PC-9 (cell line): ENCODE measurements at regions of chr12 and their contacts with region 1.

Region 1: GRCh38 chr12:13100882-13101769 is 2.3 kb downstream of the GSG1 start:
- DNase-seq: peak; percentile 87 to 99
- H3K4me3 ChIP-seq: peak overlapping the region; percentile 70
- H3K27ac ChIP-seq: peak overlapping the region; percentile 97
- H3K4me1 ChIP-seq: peaks cover 70% of the 10 kb centered on the region
- H3K27me3 ChIP-seq: no peaks in the 10 kb centered on the region
- CTCF ChIP-seq: no peak

Region 2: DNA sequence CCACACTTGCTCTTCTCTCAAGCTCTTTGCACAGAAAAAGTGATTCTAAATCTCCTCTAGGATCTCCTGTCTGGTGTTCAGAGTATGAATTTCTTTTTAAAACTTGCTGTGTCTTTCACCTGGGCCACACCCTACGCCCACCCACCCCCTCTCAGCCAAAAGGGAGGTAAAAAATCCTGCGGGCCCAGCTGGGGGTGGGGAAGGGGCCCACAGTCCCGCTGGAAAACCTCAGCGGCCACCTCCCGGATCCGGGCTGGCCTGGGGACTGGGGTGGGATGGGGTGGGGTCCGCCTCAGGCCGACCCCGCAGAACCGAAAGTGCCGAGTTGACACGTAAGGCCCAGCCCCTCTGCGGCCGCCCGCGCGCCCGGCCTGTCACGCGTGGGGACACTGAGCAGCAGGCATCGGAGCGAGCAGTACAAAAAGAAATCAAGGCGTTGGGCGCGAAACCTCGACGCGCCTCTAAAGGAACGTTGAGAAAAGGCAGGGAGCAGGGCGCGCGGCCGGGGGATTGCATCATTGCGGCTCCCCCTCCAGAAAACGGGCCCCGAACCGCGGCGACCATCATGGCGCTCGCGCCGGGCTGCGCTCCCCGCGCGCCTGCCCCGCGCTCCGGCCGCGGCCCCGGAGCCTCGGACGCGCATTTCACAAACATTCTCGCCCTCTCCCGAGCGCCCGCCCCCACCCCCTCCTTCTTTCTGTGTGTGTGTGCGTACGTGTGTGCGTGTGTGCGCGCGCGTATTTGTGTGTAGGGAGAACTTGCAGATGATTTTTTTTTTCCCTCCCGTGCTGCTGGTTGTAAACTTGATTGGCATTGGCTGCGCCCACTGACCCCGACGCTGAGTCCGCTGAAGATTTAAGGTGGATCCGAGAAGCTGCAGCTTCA is 376.2 kb before region 1 on chr12:
- CTCF ChIA-PET with region 1: no interaction called
- POLR2A ChIA-PET with region 1: interaction called, 12 read pairs
- intact Hi-C with region 1: no loop called
- DNase-seq: peak in 1 of 2 experiments; percentile 96
- H3K4me3 ChIP-seq: peak overlapping the region; percentile 96
- H3K27ac ChIP-seq: peak overlapping the region; percentile 98
- H3K4me1 ChIP-seq: peaks cover 31% of the 10 kb centered on the region
- H3K27me3 ChIP-seq: no peaks in the 10 kb centered on the region
- CTCF ChIP-seq: no peak

Region 3: GRCh38 chr12:13135371-13136178 is 34.4 kb after region 1 on chr12:
- CTCF ChIA-PET with region 1: interaction called, 13 read pairs
- POLR2A ChIA-PET with region 1: interaction called, 37 read pairs
- intact Hi-C with region 1: loop called (anchors 1 kb)
- DNase-seq: peak; percentile 99
- H3K4me3 ChIP-seq: peak overlapping the region; percentile 39; the same call in 1 of the 2 replicates
- H3K27ac ChIP-seq: peak overlapping the region; percentile 88
- H3K4me1 ChIP-seq: peaks cover 50% of the 10 kb centered on the region
- H3K27me3 ChIP-seq: no peaks in the 10 kb centered on the region
- CTCF ChIP-seq: peak; percentile 32; the same call in 1 of the 2 replicates

Region 4: DNA sequence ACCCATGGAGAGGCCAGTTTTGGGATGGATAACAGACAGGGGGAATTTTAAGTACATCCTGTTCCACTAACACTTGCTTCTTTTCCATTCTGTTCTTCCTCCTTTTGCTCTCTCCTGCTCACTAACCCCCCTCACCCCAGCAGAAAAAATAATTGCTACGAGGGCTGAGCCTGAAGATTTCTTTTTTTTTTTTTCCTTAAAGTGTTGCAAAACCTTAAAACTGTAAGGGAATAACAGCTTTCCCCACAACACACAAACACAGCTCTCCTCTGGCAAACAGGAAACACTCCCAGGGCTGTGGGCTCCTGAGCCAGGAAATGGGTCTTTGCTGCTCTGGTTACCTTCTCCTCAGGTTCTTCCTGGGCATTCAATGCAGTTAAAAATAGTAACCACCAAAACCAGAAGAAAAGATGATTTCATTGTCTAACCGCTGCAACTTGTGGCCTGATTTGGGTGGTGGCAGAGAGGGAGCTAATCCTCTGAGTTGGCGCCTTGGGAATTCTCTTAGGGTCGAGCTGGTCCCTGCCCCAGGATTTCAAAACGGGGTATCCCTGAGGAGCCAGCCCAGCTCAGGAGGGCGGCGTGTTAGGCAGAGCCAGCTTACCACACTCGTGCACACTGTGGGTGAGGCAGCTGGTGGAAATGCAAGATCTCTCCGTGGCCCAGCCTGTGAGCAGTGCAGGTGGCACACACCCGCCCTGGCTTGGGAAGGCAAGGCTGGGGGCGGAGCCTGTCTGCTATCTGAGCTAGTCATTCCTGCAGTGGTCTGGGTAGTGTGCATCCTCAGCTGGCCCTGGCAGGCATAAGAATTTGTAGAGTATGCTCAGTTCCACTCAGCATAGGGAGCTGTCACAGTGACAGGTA is 78.3 kb after region 1 on chr12:
- CTCF ChIA-PET with region 1: interaction called, 7 read pairs
- POLR2A ChIA-PET with region 1: interaction called, 15 read pairs
- intact Hi-C with region 1: loop called (anchors 1 kb)
- DNase-seq: peak; percentile 94 to 95
- H3K4me3 ChIP-seq: peak overlapping the region; percentile 39; the same call in 1 of the 2 replicates
- H3K27ac ChIP-seq: peak overlapping the region; percentile 95
- H3K4me1 ChIP-seq: peaks cover 89% of the 10 kb centered on the region
- H3K27me3 ChIP-seq: no peaks in the 10 kb centered on the region
- CTCF ChIP-seq: no peak

Region 5: DNA sequence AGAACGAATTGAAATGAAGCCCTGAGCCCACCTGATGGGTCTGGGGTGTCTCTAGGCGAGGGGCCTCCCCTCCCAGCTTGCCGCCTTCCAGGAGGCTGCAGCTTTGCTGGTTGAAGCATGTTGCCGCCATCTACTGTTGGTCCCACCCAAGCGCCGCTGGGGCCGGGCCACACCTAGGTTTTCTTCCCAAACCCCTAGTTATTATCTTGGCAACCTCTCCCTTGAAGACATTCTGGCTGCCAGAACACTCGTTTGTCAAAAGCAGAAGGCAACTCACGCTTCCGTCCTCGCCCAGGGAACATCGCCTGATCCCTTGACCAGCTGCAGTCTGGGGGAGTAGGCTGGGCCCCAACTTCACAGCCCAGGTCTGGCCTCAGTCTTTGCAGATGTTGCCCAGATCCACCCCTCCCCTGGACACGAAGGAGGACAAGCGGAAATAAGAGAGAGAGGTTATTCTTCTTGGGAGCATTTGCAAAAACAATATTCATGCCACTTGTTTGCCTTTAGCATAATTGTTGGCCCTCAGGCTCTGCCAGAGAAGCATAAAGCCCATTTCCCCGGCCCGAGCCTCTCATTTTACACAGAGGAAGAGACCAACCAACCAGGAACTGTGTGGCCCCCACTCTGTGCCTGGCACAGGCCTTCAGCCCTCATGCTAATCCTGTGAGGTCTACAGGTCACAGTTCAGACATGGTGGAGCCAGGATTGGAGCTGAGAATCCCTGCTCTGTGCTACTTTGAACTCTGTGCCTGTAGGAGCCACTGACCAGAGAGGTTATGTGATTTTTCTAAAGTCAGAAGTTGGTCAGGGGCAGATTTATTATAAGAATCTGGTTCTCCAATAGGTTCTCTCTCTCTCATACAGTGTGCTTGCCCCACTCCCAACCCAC is 102.2 kb after region 1 on chr12:
- CTCF ChIA-PET with region 1: interaction called, 10 read pairs
- POLR2A ChIA-PET with region 1: interaction called, 22 read pairs
- intact Hi-C with region 1: loop called (anchors 1 kb)
- DNase-seq: peak in 1 of 2 experiments; percentile 83
- H3K4me3 ChIP-seq: peak overlapping the region; percentile 32; the same call in 1 of the 2 replicates
- H3K27ac ChIP-seq: peak overlapping the region; percentile 99
- H3K4me1 ChIP-seq: peaks cover 97% of the 10 kb centered on the region
- H3K27me3 ChIP-seq: no peaks in the 10 kb centered on the region
- CTCF ChIP-seq: no peak

Region 6: GRCh38 chr12:13376627-13377373 is 275.7 kb after region 1 on chr12:
- CTCF ChIA-PET with region 1: no interaction called
- POLR2A ChIA-PET with region 1: no interaction called
- intact Hi-C with region 1: loop called (anchors 5 kb)
- DNase-seq: peak; percentile 61 to 97
- H3K4me3 ChIP-seq: 0 out of 2 replicates have a peak overlapping the region, but pooled peaks have one; percentile 6
- H3K27ac ChIP-seq: peak overlapping the region; percentile 97
- H3K4me1 ChIP-seq: peaks cover 39% of the 10 kb centered on the region
- H3K27me3 ChIP-seq: no peaks in the 10 kb centered on the region
- CTCF ChIP-seq: no peak

Region 7: GRCh38 chr12:14167005-14167628 is 1066.0 kb after region 1 on chr12:
- CTCF ChIA-PET with region 1: interaction called, 5 read pairs
- POLR2A ChIA-PET with region 1: no interaction called
- intact Hi-C with region 1: loop called (anchors 2 kb)
- DNase-seq: peak; percentile 46 to 61
- H3K4me3 ChIP-seq: no peak overlapping the region
- H3K27ac ChIP-seq: no peak overlapping the region
- H3K4me1 ChIP-seq: no peaks in the 10 kb centered on the region
- H3K27me3 ChIP-seq: no peaks in the 10 kb centered on the region
- CTCF ChIP-seq: peak; percentile 98